HCT116 (cell line): ENCODE measurements at regions of chr6 and their contacts with region 1.

Region 1: DNA sequence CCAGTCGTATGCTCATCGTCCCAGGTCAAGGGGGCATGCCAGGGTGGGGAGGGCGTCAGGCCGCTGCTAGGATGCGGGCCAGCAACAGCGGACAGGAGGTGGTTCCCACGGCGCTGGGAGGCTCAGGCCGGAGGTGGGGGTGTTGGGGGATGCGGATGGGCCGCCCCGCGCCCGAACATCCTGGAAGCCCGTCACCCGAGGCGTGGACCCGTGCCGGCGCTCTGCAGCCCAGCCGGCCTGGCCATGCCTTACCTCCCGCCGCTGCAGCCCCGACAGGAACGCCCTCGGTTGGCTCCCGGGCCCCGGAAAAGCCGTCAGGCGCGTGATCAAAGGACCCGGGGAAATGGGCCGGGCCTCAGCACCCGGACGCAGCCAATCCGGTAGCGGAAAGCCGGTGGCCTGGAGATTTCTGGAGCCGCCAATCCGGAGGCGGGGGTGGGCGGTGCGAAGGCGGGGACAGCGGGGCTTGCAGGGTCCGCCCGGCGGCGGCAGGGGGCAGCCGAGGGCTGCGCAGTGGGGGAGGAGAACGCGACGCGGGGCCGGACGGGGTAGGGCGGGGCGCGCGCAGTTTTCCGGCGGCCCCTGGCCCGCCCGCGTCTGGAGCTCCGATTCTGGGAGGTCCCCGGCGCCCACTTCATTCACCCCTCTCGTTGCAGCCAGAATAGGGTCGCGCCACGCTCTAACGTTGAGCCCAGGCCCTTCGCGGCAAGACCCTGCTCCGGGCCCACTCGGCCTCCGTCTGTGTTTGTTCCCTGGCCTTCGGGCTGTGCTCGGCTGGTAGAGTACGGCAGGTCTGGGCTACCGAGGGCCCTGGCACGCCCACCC is at the start of gene SMIM29:
- DNase-seq: peak; percentile 89
- ATAC-seq: peak; percentile 60
- H3K4me3 ChIP-seq: peak within 1 kb of the TSS; percentile 80 to 87
- H3K27ac ChIP-seq: peak within 1 kb of the TSS; percentile 95
- H3K4me1 ChIP-seq: peaks cover 26 to 59% of the 10 kb centered on the region in 2 experiments
- H3K27me3 ChIP-seq: no peaks in the 10 kb centered on the region
- CTCF ChIP-seq: peak in 2 of 3 experiments; percentile 71 to 84; a peak in 4 of 6 replicates
- POLR2A ChIP-seq: no peak
- RAD21 ChIP-seq: no peak
- total RNA-seq, gene SMIM29: 25.1 TPM

Region 2: GRCh38 chr6:33886673-33887144 is 362.2 kb before region 1 on chr6:
- CTCF ChIA-PET with region 1: no interaction called
- POLR2A ChIA-PET with region 1: no interaction called
- RAD21 ChIA-PET with region 1: no interaction called
- intact Hi-C with region 1: no loop called
- DNase-seq: no peak
- ATAC-seq: no peak
- H3K4me3 ChIP-seq: no peak overlapping the region
- H3K27ac ChIP-seq: no peak overlapping the region
- H3K4me1 ChIP-seq: peaks cover 10 to 27% of the 10 kb centered on the region in 2 experiments
- H3K27me3 ChIP-seq: no peaks in the 10 kb centered on the region
- CTCF ChIP-seq: no peak
- POLR2A ChIP-seq: no peak
- RAD21 ChIP-seq: no peak

Region 3: GRCh38 chr6:34202329-34203201 is 46.4 kb before region 1 on chr6:
- CTCF ChIA-PET with region 1: interaction called, 5 read pairs
- POLR2A ChIA-PET with region 1: interaction called, 27 read pairs
- RAD21 ChIA-PET with region 1: no interaction called
- intact Hi-C with region 1: loop called (anchors 2 kb)
- DNase-seq: peak; percentile 43
- ATAC-seq: peak; percentile 82
- H3K4me3 ChIP-seq: no peak overlapping the region
- H3K27ac ChIP-seq: no peak overlapping the region; the same call in 1 of the 2 replicates
- H3K4me1 ChIP-seq: peaks cover 0 to 52% of the 10 kb centered on the region in 2 experiments; a peak in 3 of 4 replicates
- H3K27me3 ChIP-seq: no peaks in the 10 kb centered on the region
- CTCF ChIP-seq: no peak
- POLR2A ChIP-seq: peak; percentile 99
- RAD21 ChIP-seq: no peak

Region 4: DNA sequence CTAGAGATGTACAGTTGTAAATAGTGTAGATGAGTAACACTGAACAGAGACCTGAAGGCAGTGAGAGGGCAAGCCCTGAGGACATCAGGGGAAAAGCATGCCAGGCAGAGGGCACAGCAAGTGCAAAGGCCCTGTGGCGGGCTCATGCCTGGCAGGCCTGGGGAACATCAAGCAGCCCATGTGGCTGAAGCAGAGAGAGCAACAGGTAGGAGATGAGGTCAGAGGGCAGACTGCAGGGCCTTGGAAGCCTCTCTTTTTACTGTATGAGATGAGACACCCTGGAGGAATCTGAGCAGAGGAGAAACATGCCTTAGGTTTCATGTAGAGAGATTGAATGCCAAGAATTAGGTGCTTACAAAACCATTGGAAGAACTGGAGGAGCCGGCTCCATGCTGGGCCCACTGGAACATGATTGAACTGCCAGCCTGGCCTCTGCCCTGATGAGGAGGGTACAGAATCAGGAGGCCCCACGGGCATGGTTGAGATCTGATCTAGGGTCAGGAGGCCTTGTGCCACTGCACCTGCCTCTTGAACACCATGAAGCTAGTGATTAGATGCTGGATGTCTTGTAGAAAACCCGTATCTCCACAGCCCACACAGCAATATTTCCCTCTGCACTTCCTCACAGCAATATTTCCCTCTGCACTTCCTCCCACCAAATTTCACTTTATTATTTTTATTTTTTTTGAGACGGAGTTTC is 18.1 kb before region 1 on chr6:
- CTCF ChIA-PET with region 1: interaction called, 4 read pairs
- POLR2A ChIA-PET with region 1: interaction called, 21 read pairs
- RAD21 ChIA-PET with region 1: interaction called in 1 of 2 experiments, 3 read pairs
- intact Hi-C with region 1: no loop called
- DNase-seq: no peak
- ATAC-seq: no peak
- H3K4me3 ChIP-seq: no peak overlapping the region
- H3K27ac ChIP-seq: peak overlapping the region; percentile 87
- H3K4me1 ChIP-seq: peaks cover 54 to 100% of the 10 kb centered on the region in 2 experiments
- H3K27me3 ChIP-seq: no peaks in the 10 kb centered on the region
- CTCF ChIP-seq: no peak
- POLR2A ChIP-seq: no peak
- RAD21 ChIP-seq: no peak

Region 5: GRCh38 chr6:34260576-34261267 is 11.8 kb after region 1 on chr6:
- CTCF ChIA-PET with region 1: no interaction called
- POLR2A ChIA-PET with region 1: no interaction called
- RAD21 ChIA-PET with region 1: no interaction called
- intact Hi-C with region 1: no loop called
- DNase-seq: no peak
- ATAC-seq: no peak
- H3K4me3 ChIP-seq: no peak overlapping the region
- H3K27ac ChIP-seq: no peak overlapping the region
- H3K4me1 ChIP-seq: no peaks in the 10 kb centered on the region
- H3K27me3 ChIP-seq: no peaks in the 10 kb centered on the region
- CTCF ChIP-seq: no peak
- POLR2A ChIP-seq: no peak
- RAD21 ChIP-seq: no peak

Region 6: GRCh38 chr6:34392497-34393190 is 143.7 kb after region 1 on chr6 and contains the start of gene NUDT3:
- CTCF ChIA-PET with region 1: interaction called, 9 read pairs
- POLR2A ChIA-PET with region 1: no interaction called
- RAD21 ChIA-PET with region 1: no interaction called
- intact Hi-C with region 1: loop called (anchors 2 kb)
- DNase-seq: peak; percentile 87
- ATAC-seq: peak; percentile 89
- H3K4me3 ChIP-seq: peak within 1 kb of the TSS; percentile 78 to 91
- H3K27ac ChIP-seq: peak within 1 kb of the TSS; percentile 95
- H3K4me1 ChIP-seq: peaks cover 10 to 18% of the 10 kb centered on the region in 2 experiments
- H3K27me3 ChIP-seq: no peaks in the 10 kb centered on the region
- CTCF ChIP-seq: peak; percentile 58 to 74 (median 63); a peak in 5 of 6 replicates
- POLR2A ChIP-seq: peak; percentile 68
- RAD21 ChIP-seq: peak; percentile 78
- total RNA-seq, gene NUDT3: 25.2 TPM

Region 7: DNA sequence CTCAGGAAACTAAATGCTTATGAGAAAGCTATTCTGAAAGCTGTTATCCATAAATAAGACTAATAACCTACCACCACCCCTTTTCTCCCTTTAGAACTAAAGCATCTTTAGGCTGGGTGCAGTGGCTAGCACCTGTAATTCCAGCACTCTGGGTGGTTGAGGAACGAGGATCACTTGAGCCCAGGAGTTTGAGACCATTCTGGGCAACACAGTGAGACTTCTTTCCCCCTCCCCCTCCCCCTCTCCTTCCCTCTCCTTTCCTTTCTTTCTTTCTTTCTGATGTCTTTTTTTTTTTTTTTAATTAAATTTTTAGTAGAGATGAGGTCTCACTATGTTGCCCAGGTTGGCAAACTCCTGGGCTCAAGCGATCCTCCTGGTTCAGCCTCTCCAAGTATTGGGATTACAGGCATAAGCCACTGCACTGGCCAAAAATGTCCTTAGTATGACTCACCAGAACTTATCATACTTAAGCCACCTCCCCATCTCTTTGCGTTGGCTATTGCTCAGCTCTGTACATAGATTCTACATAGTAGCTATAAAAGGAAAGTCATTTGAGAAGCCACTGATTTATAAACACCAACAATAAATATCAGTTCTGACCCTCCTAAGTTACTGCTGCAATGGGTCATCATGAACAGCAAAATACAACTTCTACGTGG is 362.0 kb after region 1 on chr6:
- CTCF ChIA-PET with region 1: interaction called, 12 read pairs
- POLR2A ChIA-PET with region 1: no interaction called
- RAD21 ChIA-PET with region 1: interaction called in 1 of 2 experiments, 6 read pairs
- intact Hi-C with region 1: loop called (anchors 1 kb)
- DNase-seq: peak; percentile 64
- ATAC-seq: peak; percentile 67
- H3K4me3 ChIP-seq: no peak overlapping the region
- H3K27ac ChIP-seq: no peak overlapping the region; the same call in 1 of the 2 replicates
- H3K4me1 ChIP-seq: peaks cover 27 to 41% of the 10 kb centered on the region in 2 experiments
- H3K27me3 ChIP-seq: no peaks in the 10 kb centered on the region
- CTCF ChIP-seq: no peak
- POLR2A ChIP-seq: no peak
- RAD21 ChIP-seq: 0 out of 2 replicates have a peak, but pooled peaks have one; percentile 3